ENCODE measurements at regions of chr2 and their contacts with region 1.

Region 1: GRCh38 chr2:227890495-227891079 is 19.2 kb downstream of the DAW1 start:
- DNase-seq: no peak
- H3K4me3 ChIP-seq: no peak overlapping the region
- CTCF ChIP-seq: peak; percentile 27

Region 2: DNA sequence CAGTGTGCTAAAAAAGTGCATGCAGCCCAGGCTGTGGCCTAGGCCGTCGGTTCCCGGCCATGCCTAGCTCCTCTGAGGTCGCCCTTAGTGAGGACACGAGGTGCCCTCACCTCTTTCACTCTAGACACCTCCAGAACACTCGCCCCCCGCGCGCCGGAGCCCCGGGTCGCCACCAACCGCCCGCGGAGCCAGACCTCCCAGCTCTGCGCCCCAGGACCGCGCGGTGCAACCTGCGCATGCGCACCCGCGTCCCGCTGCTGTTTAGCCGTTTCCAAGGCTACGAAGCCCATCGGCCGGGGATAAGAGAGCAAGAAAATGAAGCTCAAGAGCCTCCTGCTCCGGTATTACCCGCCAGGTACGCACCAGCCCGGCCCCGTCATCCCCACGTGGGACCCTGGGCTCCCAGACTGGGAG is 19.2 kb before region 1 on chr2 and contains the start of gene DAW1:
- CTCF ChIA-PET with region 1: interaction called, 31 read pairs
- POLR2A ChIA-PET with region 1: no interaction called
- DNase-seq: no peak
- H3K4me3 ChIP-seq: peak within 1 kb of the TSS; percentile 46
- CTCF ChIP-seq: no peak

Region 3: GRCh38 chr2:227903381-227903780 is 12.8 kb after region 1 on chr2:
- CTCF ChIA-PET with region 1: interaction called, 21 read pairs
- POLR2A ChIA-PET with region 1: no interaction called
- DNase-seq: no peak
- H3K4me3 ChIP-seq: no peak overlapping the region
- CTCF ChIP-seq: no peak

Region 4: GRCh38 chr2:228657807-228658402 is 767.3 kb after region 1 on chr2:
- CTCF ChIA-PET with region 1: interaction called, 43 read pairs
- POLR2A ChIA-PET with region 1: no interaction called
- DNase-seq: no peak
- H3K4me3 ChIP-seq: no peak overlapping the region
- CTCF ChIP-seq: peak; percentile 32

Region 5: DNA sequence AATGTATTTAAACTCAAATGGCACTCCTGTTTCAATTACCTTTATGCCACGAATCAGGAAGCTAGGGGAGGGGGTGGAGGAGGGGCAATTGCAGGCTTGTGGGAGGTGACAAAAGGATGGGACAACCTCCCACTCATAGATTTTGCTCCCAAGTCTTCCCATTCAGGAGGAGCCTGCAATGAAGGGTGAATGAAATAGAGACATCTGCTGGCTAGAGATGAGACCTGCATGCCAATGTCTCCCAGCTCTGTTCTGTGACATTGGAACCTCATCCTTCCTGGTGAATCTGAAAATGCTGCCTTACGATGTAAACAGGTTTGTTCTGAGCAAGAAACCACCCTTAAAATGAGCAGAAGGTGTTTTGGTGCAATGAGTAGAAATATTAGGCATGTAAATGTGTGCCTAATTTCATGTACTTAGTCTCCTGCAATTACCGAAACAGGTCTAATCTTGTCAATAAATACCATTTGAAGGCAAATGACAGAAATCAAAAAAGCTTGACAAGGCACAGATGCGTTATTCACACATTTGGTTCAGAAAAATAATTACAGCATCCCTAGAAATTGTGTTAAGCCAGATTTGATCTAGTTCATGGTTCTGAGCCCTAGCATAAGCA is 1383.2 kb after region 1 on chr2:
- CTCF ChIA-PET with region 1: interaction called, 54 read pairs
- POLR2A ChIA-PET with region 1: no interaction called
- DNase-seq: no peak
- H3K4me3 ChIP-seq: no peak overlapping the region
- CTCF ChIP-seq: peak; percentile 70

Measured in AG04449 (cell line).